Esophagus muscularis mucosa (tissue), 4 donors: ENCODE measurements at regions of chr2 and their contacts with region 1.

Region 1: DNA sequence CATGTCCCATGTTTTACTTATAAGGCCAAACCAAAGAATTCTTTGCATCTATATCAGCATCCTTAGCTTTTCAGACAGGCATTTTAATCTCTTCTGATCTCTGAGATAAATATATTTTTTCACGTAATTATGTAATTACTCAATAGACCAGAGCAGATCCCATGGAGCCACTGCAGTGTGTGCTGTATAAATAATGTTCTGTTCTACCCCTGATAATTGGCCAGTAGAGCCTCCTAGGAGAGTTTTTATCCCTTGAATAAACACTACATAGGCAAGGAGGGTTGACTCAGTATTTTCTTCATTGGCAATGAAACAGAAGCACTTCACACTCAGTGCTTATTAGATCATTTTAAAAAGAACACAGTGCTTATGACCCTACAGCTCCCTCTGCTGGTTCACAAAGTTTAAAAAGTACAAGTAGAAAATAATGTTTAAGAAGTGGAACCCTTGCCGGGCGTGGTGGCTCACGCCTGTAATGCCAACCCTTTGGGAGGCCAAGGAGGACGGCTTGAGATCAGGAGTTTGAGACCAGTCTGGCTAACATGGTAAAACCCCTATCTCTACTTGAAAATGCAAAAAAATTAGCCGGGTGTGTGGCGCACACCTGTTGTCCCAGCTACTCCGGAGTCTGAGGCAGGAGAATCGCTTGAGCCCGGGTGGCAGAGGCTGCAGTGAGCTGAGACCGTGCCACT is 91.9 kb downstream of the PPP1R1C start:
- DNase-seq: no peak
- H3K4me3 ChIP-seq: no peak overlapping the region
- H3K27ac ChIP-seq: no peak overlapping the region
- H3K4me1 ChIP-seq: peaks cover 11 to 22% (median 14%) of the 10 kb centered on the region in 4 donors
- H3K27me3 ChIP-seq: no peaks in the 10 kb centered on the region
- CTCF ChIP-seq: peak; percentile 72 to 75 (median 75)
- EP300 ChIP-seq: no peak
- POLR2A ChIP-seq: no peak

Region 2: GRCh38 chr2:181742922-181743722 is 334.5 kb before region 1 on chr2:
- intact Hi-C with region 1: loop called (anchors 2 kb)
- DNase-seq: no peak
- H3K4me3 ChIP-seq: no peak overlapping the region
- H3K27ac ChIP-seq: no peak overlapping the region
- H3K4me1 ChIP-seq: peaks cover 0 to 10% (median 0%) of the 10 kb centered on the region in 4 donors
- H3K27me3 ChIP-seq: no peaks in the 10 kb centered on the region
- CTCF ChIP-seq: peak; percentile 67 to 72 (median 67)
- EP300 ChIP-seq: no peak
- POLR2A ChIP-seq: no peak

Region 3: GRCh38 chr2:181850936-181851560 is 226.5 kb before region 1 on chr2:
- intact Hi-C with region 1: no loop called
- DNase-seq: no peak
- H3K4me3 ChIP-seq: no peak overlapping the region
- H3K27ac ChIP-seq: no peak overlapping the region
- H3K4me1 ChIP-seq: peaks cover 0 to 41% (median 37%) of the 10 kb centered on the region in 4 donors
- H3K27me3 ChIP-seq: no peaks in the 10 kb centered on the region
- CTCF ChIP-seq: no peak
- EP300 ChIP-seq: no peak
- POLR2A ChIP-seq: no peak

Region 4: GRCh38 chr2:181904022-181904632 is 173.5 kb before region 1 on chr2:
- intact Hi-C with region 1: loop called (anchors 5 kb)
- DNase-seq: no peak
- H3K4me3 ChIP-seq: no peak overlapping the region
- H3K27ac ChIP-seq: no peak overlapping the region
- H3K4me1 ChIP-seq: peaks cover 7 to 65% (median 52%) of the 10 kb centered on the region in 4 donors
- H3K27me3 ChIP-seq: no peaks in the 10 kb centered on the region
- CTCF ChIP-seq: peak; percentile 45 to 61 (median 61)
- EP300 ChIP-seq: no peak
- POLR2A ChIP-seq: no peak

Region 5: GRCh38 chr2:181970160-181970794 is 107.3 kb before region 1 on chr2:
- intact Hi-C with region 1: loop called (anchors 5 kb)
- DNase-seq: no peak
- H3K4me3 ChIP-seq: no peak overlapping the region
- H3K27ac ChIP-seq: no peak overlapping the region
- H3K4me1 ChIP-seq: no peaks in the 10 kb centered on the region
- H3K27me3 ChIP-seq: no peaks in the 10 kb centered on the region
- CTCF ChIP-seq: no peak
- EP300 ChIP-seq: no peak
- POLR2A ChIP-seq: no peak